PC-9 (cell line): ENCODE measurements at regions of chr7 and their contacts with region 1.

Region 1: DNA sequence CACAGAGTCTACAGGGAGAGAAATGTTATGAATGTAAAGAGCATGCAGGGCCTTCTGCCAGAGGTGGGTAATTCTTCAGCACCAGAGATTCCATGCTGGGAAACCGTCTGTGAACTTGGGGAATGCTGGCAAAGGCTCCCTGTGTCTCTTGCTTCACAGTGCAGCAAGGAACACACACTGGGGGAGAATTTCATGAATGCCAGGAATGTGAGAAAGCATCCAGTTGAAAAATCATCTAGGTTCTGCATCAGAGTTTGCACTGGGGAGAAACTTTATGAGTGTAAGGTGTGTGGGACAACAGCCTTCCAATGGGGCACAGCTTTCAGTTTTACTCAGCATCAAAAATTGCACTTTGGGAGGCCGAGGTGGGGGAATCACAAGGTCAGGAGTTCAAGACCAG is 224.3 kb upstream of the IGFBP3 start:
- DNase-seq: peak; percentile 89 to 99
- H3K4me3 ChIP-seq: no peak overlapping the region
- H3K27ac ChIP-seq: peak overlapping the region; percentile 80
- H3K4me1 ChIP-seq: peaks cover 29% of the 10 kb centered on the region
- H3K27me3 ChIP-seq: no peaks in the 10 kb centered on the region
- CTCF ChIP-seq: no peak

Region 2: DNA sequence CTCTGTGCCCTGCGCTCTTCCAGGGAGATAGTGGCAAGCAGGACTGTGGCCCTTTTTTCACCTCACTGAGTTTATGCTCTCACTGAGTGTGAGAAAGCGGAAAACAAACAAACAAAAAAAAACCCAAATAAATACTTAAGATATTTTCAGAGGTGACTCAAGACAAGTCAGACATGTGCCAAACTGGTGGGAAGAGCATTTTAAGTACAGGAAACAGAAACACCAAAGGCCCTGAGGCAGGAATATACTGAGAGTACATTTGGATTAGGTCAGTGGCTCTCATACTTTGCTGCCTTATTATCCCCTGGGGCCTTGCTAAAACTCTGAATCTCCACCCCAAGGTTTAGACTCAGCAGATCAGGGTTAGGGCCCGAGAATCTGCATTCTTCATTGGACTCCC is 112.4 kb before region 1 on chr7:
- CTCF ChIA-PET with region 1: no interaction called
- POLR2A ChIA-PET with region 1: no interaction called
- intact Hi-C with region 1: loop called (anchors 2 kb)
- DNase-seq: peak; percentile 54 to 99
- H3K4me3 ChIP-seq: no peak overlapping the region; the same call in 1 of the 2 replicates
- H3K27ac ChIP-seq: peak overlapping the region; percentile 92
- H3K4me1 ChIP-seq: peaks cover 58% of the 10 kb centered on the region
- H3K27me3 ChIP-seq: no peaks in the 10 kb centered on the region
- CTCF ChIP-seq: no peak

Region 3: DNA sequence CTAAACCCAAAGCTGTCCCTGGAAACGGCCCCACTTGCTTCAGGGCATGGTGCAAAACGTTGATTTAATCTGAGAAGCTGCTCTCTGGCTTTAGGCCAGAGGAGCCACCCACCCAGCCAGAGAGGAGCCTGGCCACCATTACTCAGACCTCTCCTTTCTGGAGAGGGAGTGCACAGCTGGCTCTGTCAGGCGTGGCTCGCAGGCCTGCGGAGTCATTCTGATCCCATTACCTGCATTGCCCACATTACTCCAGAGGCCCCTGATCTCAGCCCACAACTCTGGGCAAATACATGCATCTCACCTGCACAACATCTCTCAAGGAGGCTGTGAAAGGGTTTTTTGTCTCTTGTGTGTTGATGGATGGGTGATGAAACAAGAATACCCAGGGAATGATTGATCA is 145.7 kb after region 1 on chr7:
- CTCF ChIA-PET with region 1: no interaction called
- POLR2A ChIA-PET with region 1: no interaction called
- intact Hi-C with region 1: loop called (anchors 2 kb)
- DNase-seq: peak; percentile 72 to 83
- H3K4me3 ChIP-seq: no peak overlapping the region
- H3K27ac ChIP-seq: peak overlapping the region; percentile 77
- H3K4me1 ChIP-seq: peaks cover 30% of the 10 kb centered on the region
- H3K27me3 ChIP-seq: no peaks in the 10 kb centered on the region
- CTCF ChIP-seq: no peak